ENCODE measurements at regions of chr1 and their contacts with region 1.

Region 1: GRCh38 chr1:245156081-245156735 is 1.4 kb downstream of the KIF26B start:
- DNase-seq: peak; percentile 93
- CTCF ChIP-seq: peak; percentile 82

Region 2: GRCh38 chr1:245166471-245166885 is 10.3 kb after region 1 on chr1:
- CTCF ChIA-PET with region 1: interaction called, 22 read pairs
- POLR2A ChIA-PET with region 1: no interaction called
- DNase-seq: no peak
- CTCF ChIP-seq: no peak

Region 3: DNA sequence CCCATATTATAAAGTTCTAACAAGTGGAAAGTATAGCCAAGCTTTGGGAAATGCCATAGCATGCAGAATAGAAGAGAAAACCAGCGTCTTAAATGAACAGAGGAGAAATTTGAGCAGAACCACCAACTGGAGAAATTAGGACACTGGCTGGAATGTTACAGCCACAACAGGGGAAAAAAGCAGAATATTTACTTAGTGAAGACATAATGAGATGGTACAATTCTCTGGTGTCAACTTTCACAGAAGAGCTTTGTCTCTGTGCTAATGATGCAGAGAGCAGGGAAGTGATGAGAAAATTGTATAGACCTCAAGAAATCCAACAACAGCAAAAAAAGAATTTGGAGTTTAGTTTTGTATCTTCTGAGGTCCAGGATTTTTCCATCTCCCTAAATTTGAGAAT is 248.3 kb after region 1 on chr1:
- CTCF ChIA-PET with region 1: no interaction called
- POLR2A ChIA-PET with region 1: no interaction called
- DNase-seq: no peak
- CTCF ChIP-seq: no peak

Region 4: DNA sequence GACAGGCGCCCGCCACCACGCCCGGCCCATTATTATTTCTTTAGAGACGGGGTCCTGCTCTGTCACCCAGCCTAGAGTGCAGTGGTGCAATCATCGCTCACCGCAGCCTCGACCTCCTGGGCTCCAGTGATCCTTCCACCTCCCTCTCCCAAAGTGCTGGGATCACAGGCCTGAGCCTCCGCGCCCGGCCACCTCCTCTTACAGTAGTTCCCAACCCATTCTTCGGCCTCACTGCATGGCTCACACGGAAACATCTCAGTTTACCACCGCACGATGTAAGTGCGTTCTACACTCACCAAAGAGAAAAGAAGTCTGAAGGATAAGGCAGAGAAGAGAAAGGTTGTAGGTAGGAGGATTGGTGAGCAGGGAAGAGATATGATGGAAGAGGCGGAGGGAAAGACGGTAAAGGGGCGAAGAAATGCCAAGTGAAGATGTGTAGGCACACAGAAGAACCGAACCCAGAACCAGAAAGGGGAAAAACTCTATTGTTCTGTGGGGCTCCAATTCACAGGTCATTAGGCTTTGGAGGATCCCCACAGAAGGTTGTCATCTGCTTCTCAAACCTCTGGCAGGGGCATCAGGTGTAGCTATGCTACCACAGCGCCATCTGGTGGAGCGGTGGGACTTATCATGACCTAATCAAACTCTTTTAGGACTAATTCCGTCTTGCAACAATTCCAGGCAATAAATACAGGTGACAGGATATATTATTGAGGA is 846.7 kb after region 1 on chr1:
- CTCF ChIA-PET with region 1: interaction called, 64 read pairs
- POLR2A ChIA-PET with region 1: no interaction called
- DNase-seq: peak; percentile 80
- CTCF ChIP-seq: peak; percentile 84

Region 5: DNA sequence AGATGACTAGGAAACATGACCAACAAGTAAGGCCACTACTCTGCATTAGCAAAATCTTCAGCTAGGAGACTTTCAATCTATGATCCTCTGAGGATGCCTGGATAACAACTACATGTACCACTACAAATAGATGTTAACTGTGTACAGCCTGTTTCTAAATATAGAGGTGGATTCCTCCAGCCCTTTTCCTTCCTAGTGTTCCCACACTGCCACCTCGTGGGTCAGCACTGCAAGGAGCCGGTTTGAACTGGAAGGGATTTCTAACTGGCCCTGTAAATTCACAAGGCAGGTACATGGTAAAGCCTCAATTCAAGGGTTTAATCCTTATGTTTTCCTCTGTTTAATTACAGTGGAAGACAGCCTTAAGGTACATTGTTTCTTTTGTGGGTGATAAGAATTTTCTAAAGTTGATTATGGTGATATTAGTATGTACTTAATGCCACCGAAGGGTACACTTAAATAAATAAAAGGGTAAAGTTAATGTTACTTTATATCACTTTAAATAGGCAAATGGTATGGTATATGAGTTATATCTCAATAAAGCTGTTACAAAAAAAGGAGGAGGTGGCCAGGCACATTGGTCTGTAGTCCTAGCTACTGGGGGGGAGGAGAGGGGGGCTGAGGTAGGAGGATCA is 1336.5 kb after region 1 on chr1:
- CTCF ChIA-PET with region 1: interaction called, 14 read pairs
- POLR2A ChIA-PET with region 1: no interaction called
- DNase-seq: peak; percentile 50
- CTCF ChIP-seq: peak; percentile 73